ENCODE measurements at regions of chr17 and their contacts with region 1.

Region 1: GRCh38 chr17:40791787-40792436 is 7.8 kb downstream of the KRT28 start:
- DNase-seq: peak; percentile 31
- H3K4me3 ChIP-seq: no peak overlapping the region
- H3K27ac ChIP-seq: no peak overlapping the region
- H3K4me1 ChIP-seq: no peaks in the 10 kb centered on the region
- H3K27me3 ChIP-seq: no peaks in the 10 kb centered on the region
- CTCF ChIP-seq: peak; percentile 60

Region 2: GRCh38 chr17:40331743-40332641 is 459.9 kb before region 1 on chr17:
- CTCF ChIA-PET with region 1: no interaction called
- POLR2A ChIA-PET with region 1: no interaction called
- intact Hi-C with region 1: no loop called
- DNase-seq: no peak
- H3K4me3 ChIP-seq: no peak overlapping the region
- H3K27ac ChIP-seq: no peak overlapping the region
- H3K4me1 ChIP-seq: peaks cover 4% of the 10 kb centered on the region
- H3K27me3 ChIP-seq: no peaks in the 10 kb centered on the region
- CTCF ChIP-seq: no peak

Region 3: GRCh38 chr17:40622509-40622928 is 169.4 kb before region 1 on chr17:
- CTCF ChIA-PET with region 1: no interaction called
- POLR2A ChIA-PET with region 1: no interaction called
- intact Hi-C with region 1: loop called (anchors 2 kb)
- DNase-seq: peak; percentile 16
- H3K4me3 ChIP-seq: no peak overlapping the region
- H3K27ac ChIP-seq: no peak overlapping the region
- H3K4me1 ChIP-seq: peaks cover 6% of the 10 kb centered on the region
- H3K27me3 ChIP-seq: no peaks in the 10 kb centered on the region
- CTCF ChIP-seq: no peak

Region 4: DNA sequence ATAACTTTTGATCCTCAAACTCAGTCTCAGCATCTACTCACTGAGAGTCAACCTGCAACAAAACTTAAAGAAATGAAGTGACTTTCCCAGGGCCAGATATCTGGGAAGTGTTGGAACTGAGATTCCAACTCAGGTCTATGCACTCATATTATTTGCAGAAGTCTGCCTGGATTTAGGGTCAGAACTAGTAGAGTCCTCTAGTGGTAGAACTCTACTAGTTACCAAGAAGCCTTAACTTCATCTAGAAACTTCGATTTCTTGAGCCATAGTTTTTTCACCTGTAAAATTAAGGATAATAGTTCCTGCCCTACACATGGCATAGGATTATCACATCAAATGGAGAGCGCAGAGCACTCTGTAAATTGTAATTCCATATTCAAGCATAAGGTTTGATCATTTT is 65.0 kb before region 1 on chr17:
- CTCF ChIA-PET with region 1: no interaction called
- POLR2A ChIA-PET with region 1: no interaction called
- intact Hi-C with region 1: no loop called
- DNase-seq: no peak
- H3K4me3 ChIP-seq: no peak overlapping the region
- H3K27ac ChIP-seq: no peak overlapping the region
- H3K4me1 ChIP-seq: no peaks in the 10 kb centered on the region
- H3K27me3 ChIP-seq: no peaks in the 10 kb centered on the region
- CTCF ChIP-seq: no peak

Region 5: GRCh38 chr17:40779181-40779909 is 12.6 kb before region 1 on chr17:
- CTCF ChIA-PET with region 1: no interaction called
- POLR2A ChIA-PET with region 1: no interaction called
- intact Hi-C with region 1: no loop called
- DNase-seq: peak; percentile 24
- H3K4me3 ChIP-seq: peak overlapping the region; percentile 31
- H3K27ac ChIP-seq: no peak overlapping the region
- H3K4me1 ChIP-seq: no peaks in the 10 kb centered on the region
- H3K27me3 ChIP-seq: no peaks in the 10 kb centered on the region
- CTCF ChIP-seq: no peak

Measured in A673 (cell line).